ENCODE measurements at regions of chr6 and their contacts with region 1.

Region 1: DNA sequence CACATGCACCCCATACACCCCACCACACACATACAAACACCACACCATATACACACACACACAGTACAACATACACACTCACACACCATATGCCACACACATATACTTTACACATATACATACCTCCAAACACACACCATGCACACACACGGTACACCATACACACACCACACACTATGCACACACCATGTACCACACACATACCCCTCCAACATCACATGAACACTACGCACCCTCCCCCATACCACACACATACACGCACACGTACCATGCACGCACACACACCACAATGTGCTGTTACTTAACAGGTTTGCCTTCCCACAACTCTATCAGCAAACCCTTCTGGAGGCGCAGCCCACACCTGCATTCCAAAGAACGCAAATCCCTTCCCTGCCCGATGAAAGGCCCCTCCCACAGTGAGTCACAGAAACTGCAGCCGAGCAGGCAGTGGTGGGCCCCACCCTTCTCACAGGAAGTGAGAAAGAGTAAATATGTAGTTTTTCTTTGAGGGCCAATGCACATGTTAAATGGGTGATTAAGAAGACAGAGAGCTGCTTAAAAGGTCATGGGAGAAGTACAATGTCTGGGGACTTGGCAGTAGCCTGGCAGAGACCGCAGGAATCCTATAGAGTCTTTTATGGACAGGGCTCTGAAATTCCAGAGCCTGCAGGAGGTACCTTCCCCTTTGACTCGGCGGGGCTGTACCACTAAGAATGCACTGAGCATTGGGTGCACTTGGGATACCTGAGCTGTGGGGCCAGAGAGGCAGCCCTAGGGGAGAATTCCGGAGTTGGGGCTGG is 34.1 kb upstream of the EZR start:
- DNase-seq: peak; percentile 54 to 93 (median 86)
- ATAC-seq: peak; percentile 79
- H3K4me3 ChIP-seq: peak overlapping the region; percentile 55
- H3K4me3 Mint-ChIP-seq: no peak overlapping the region
- H3K27ac ChIP-seq: peak overlapping the region; percentile 83
- H3K27ac Mint-ChIP-seq: no peak overlapping the region
- H3K4me1 ChIP-seq: peaks cover 47 to 55% of the 10 kb centered on the region in 2 donors
- H3K4me1 Mint-ChIP-seq: peaks cover 16 to 42% (median 33%) of the 10 kb centered on the region in 7 donors
- H3K27me3 ChIP-seq: no peaks in the 10 kb centered on the region
- H3K27me3 Mint-ChIP-seq: no peaks in the 10 kb centered on the region

Region 2: DNA sequence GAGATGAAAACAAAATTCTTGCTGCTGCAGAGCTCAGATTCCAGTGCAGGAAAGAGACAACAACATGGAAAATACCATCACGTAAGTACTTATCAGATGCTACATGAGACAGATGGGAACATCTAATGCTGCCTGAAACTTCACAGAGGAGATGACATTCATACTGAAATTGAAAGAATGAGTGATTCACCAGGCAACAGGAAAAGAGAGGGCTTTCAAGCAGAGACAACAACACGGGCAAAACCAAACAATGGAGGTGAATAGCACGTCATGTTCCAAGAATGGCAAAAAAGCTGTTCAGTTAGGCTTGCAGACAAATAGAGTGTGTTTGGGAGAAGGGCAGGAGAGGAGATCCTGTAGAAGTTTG is 645.9 kb before region 1 on chr6:
- CTCF ChIA-PET with region 1: no interaction called
- POLR2A ChIA-PET with region 1: no interaction called
- intact Hi-C with region 1: loop called in 1 of 2 experiments (anchors 1 kb)
- DNase-seq: peak in 4 of 9 donors; percentile 9 to 42 (median 18)
- ATAC-seq: peak; percentile 54
- H3K4me3 ChIP-seq: no peak overlapping the region
- H3K4me3 Mint-ChIP-seq: peak overlapping the region in 7 of 10 donors; percentile 2 to 66 (median 22)
- H3K27ac ChIP-seq: no peak overlapping the region
- H3K27ac Mint-ChIP-seq: peak overlapping the region in 7 of 9 donors; percentile 4 to 90 (median 25)
- H3K4me1 ChIP-seq: no peaks in the 10 kb centered on the region
- H3K4me1 Mint-ChIP-seq: peaks cover 6 to 47% (median 13%) of the 10 kb centered on the region in 7 donors
- H3K27me3 ChIP-seq: no peaks in the 10 kb centered on the region
- H3K27me3 Mint-ChIP-seq: peaks cover 0 to 10% (median 4%) of the 10 kb centered on the region in 5 donors

Region 3: DNA sequence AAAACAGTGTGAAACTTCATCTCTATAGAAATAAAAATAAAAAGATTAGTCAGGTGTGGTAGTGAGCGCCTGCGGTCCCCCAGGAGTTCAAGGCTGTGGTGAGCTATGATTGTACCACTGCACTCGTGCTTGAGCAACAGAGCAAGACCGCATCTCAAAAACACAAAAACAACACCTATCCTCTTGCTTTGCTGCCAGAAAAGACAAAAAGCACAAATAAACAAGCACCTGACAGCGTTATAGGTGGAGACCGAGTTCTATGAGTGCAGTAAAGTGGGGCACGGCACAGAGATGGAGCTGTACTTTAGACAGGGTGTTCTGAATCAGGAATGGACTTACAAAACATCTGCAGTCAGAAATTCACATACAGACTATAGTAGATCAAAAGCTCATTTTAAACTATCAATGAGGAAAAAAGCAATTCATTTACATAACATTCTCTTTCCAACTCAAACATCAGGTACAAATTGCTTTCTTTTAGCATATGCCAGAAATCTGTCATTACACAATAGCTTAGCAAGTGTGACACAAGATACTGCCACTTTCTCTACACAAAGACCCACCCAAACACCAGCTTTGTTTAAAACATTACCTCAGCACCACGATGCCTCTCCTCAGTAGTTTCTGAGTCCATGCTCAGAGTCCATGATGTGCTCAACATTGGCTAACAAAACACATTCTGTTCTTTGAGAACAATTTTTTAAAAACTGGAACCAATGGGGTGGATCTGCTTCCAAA is 44.2 kb before region 1 on chr6:
- CTCF ChIA-PET with region 1: interaction called, 6 read pairs
- POLR2A ChIA-PET with region 1: interaction called, 10 read pairs
- intact Hi-C with region 1: no loop called
- DNase-seq: peak in 2 of 9 donors; percentile 35
- ATAC-seq: peak; percentile 31
- H3K4me3 ChIP-seq: no peak overlapping the region
- H3K4me3 Mint-ChIP-seq: peak overlapping the region in 9 of 10 donors; percentile 9 to 53 (median 35)
- H3K27ac ChIP-seq: no peak overlapping the region
- H3K27ac Mint-ChIP-seq: peak overlapping the region in 6 of 9 donors; percentile 50 to 79 (median 72)
- H3K4me1 ChIP-seq: peaks cover 78 to 94% of the 10 kb centered on the region in 2 donors
- H3K4me1 Mint-ChIP-seq: peaks cover 63 to 100% (median 97%) of the 10 kb centered on the region in 7 donors
- H3K27me3 ChIP-seq: no peaks in the 10 kb centered on the region
- H3K27me3 Mint-ChIP-seq: no peaks in the 10 kb centered on the region

Region 4: GRCh38 chr6:158894193-158894592 is 40.9 kb after region 1 on chr6:
- CTCF ChIA-PET with region 1: no interaction called
- POLR2A ChIA-PET with region 1: no interaction called
- intact Hi-C with region 1: no loop called
- DNase-seq: no peak
- ATAC-seq: no peak
- H3K4me3 ChIP-seq: no peak overlapping the region
- H3K4me3 Mint-ChIP-seq: no peak overlapping the region
- H3K27ac ChIP-seq: no peak overlapping the region
- H3K27ac Mint-ChIP-seq: no peak overlapping the region
- H3K4me1 ChIP-seq: no peaks in the 10 kb centered on the region
- H3K4me1 Mint-ChIP-seq: peaks cover 0 to 2% (median 0%) of the 10 kb centered on the region in 7 donors
- H3K27me3 ChIP-seq: no peaks in the 10 kb centered on the region
- H3K27me3 Mint-ChIP-seq: peaks cover 0 to 2% (median 0%) of the 10 kb centered on the region in 5 donors

Region 5: DNA sequence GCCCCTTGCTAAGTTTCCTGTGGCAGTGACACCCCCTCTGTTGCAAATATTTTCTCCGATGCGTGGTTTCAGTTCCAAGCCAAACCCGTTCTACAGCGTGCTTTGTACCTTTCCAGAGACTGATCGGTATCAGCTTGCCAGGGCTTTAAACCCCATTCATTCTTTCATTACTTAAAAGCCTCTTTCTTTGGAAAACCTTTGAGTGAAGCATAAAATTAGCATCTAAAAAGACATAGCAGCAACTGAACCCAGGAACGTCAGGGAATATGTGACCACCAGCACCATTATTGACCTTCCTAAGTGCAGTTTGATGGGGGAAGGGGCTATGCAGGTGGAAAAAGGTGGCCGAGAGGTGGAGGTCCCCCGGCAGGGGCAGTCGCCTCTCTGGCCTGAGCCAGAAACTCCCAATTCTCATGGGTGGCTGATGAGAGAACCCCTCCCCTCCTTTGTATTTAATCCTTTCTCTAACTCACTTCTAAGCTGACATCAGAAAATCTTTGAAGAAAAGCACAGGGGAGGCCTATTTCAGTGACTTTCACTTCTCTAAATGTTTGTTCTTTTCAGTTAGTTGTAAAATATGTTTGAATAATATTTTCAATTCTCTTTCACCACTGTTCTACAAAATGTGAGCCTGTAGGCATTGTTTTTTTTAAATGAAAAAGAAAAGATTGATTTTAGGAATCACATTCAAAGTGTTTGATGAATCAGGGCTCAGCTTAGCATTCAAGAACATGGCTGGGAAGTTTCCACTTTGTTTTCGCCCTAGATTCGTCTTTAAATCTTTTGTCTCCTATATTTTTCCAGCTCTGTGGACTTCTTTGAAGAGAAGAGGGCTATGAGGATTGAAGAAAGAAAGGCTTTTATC is 57.4 kb after region 1 on chr6:
- CTCF ChIA-PET with region 1: no interaction called
- POLR2A ChIA-PET with region 1: interaction called, 4 read pairs
- intact Hi-C with region 1: loop called in 1 of 2 experiments (anchors 2 kb)
- DNase-seq: peak in 4 of 9 donors; percentile 25 to 32 (median 28)
- ATAC-seq: peak; percentile 59
- H3K4me3 ChIP-seq: peak overlapping the region; percentile 24
- H3K4me3 Mint-ChIP-seq: peak overlapping the region; percentile 63 to 83 (median 74)
- H3K27ac ChIP-seq: peak overlapping the region; percentile 52
- H3K27ac Mint-ChIP-seq: peak overlapping the region in 8 of 9 donors; percentile 69 to 91 (median 83)
- H3K4me1 ChIP-seq: peaks cover 23 to 32% of the 10 kb centered on the region in 2 donors
- H3K4me1 Mint-ChIP-seq: peaks cover 26 to 46% (median 37%) of the 10 kb centered on the region in 7 donors
- H3K27me3 ChIP-seq: no peaks in the 10 kb centered on the region
- H3K27me3 Mint-ChIP-seq: peaks cover 0 to 3% (median 0%) of the 10 kb centered on the region in 5 donors

Region 6: DNA sequence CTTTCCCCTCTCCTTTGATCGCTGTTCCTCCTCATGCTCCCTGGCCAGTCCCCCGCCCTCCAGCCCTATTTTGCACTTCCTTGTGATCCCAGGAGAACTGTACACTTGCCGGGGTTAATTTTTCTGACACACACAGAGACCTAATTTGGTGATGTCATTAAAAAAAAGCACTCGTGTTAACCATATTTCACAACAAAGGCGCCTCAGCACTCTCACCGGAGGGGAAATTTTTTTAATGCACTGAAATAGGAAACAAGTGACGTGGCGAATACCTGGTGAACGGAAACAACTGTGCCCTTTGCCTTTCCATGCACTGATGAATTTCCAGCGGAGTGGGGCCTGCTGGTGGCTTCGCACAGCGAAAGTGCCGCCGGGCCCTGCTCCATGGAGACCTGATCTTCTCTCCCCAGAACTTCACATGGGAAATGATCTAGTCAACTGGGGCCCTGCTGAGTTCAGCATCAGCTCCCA is 245.4 kb after region 1 on chr6:
- CTCF ChIA-PET with region 1: no interaction called
- POLR2A ChIA-PET with region 1: no interaction called
- intact Hi-C with region 1: loop called in 1 of 2 experiments (anchors 2 kb)
- DNase-seq: peak; percentile 20 to 91 (median 84)
- ATAC-seq: peak; percentile 80
- H3K4me3 ChIP-seq: peak overlapping the region; percentile 32
- H3K4me3 Mint-ChIP-seq: peak overlapping the region; percentile 70 to 88 (median 83)
- H3K27ac ChIP-seq: peak overlapping the region; percentile 80
- H3K27ac Mint-ChIP-seq: peak overlapping the region; percentile 92 to 98 (median 96)
- H3K4me1 ChIP-seq: peaks cover 30 to 57% of the 10 kb centered on the region in 2 donors
- H3K4me1 Mint-ChIP-seq: peaks cover 47 to 86% (median 75%) of the 10 kb centered on the region in 7 donors
- H3K27me3 ChIP-seq: no peaks in the 10 kb centered on the region
- H3K27me3 Mint-ChIP-seq: no peaks in the 10 kb centered on the region